Panc1 (cell line): ENCODE measurements at regions of chr19 and their contacts with region 1.

Region 1: DNA sequence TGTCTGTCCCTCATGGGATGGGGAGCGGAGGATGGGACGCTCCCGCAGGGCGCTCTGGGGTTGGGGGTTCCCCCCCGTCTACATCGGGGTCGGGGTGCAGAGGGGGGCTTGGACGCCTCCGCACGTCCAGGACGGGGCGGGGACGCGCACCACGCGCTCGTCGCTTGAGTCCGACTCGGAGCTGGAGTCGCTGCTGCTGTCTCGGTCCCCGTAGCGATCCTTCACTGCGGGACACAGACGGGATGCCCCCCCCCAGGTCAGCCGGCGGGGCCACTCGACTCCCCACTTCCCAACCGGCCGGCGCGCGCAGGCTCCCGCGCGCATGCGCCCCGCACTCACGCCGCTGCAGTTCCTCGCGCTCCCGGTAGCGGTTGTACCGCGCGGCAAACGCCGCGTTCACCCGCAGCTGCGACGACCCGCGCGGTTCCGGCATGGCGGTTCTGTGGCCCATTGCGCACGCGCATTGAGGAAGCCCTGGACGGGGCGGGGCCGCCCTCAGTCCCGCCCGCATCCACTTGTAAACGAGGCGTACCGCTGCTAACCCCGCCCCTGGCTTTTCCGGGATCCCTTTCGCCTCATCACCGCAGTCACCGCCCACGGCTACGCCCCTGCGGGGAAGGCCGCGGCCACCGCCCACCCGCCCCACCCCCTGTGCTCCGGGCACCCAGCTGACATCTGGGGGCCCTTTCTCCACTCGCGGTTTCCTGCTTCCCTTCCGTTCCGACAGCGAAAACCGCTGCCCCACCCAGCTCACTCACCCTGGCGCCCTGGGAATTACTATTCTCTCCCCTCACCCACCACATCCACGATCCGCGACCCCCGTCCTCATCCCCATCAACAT is at the start of gene KRI1:
- DNase-seq: no peak
- ATAC-seq: peak; percentile 72
- H3K4me3 ChIP-seq: peak within 1 kb of the TSS; percentile 68 to 69
- H3K27ac ChIP-seq: peak within 1 kb of the TSS; percentile 67
- H3K4me1 ChIP-seq: peaks cover 23% of the 10 kb centered on the region
- H3K27me3 ChIP-seq: no peaks in the 10 kb centered on the region
- CTCF ChIP-seq: no peak
- total RNA-seq, gene KRI1: 34.5 TPM

Region 2: DNA sequence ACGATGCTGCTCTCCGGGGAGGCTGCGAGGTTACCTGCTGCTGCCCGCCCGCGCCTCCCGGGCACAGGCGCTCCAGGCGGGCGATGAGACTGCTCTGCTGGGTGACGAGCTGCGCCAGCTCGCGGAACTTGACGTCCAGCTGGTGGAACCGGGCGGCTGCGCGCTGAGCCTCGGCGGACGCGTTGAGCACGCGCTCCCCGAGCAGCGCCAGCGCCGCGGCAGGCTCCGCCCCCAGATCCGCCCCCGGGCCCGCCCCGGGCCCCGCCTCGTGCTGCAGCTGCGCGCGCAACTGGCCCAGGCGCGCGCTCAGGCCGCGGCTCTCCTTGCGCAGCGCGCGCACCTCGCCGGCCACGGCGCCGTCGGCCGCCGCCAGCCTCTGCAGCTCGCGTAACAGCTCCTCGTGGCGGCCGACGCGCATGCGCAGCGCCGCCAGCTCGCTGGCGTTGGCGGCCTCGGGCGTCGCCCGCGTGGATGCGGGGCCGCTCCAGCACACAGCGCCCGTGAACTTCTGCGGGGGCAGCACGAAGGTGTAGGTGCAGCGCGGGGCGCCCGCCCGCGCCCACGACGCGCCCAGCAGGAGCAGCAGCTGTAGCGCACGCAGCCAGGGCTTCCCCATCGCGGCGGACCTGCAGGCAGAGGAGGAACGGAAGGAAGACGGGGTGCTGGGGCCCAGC is 469.7 kb before region 1 on chr19:
- CTCF ChIA-PET with region 1: no interaction called
- POLR2A ChIA-PET with region 1: no interaction called
- in situ Hi-C with region 1: no loop called
- intact Hi-C with region 1: no loop called
- DNase-seq: no peak
- ATAC-seq: peak; percentile 91
- H3K4me3 ChIP-seq: peak overlapping the region; percentile 41 to 61
- H3K27ac ChIP-seq: peak overlapping the region; percentile 77
- H3K4me1 ChIP-seq: no peaks in the 10 kb centered on the region
- H3K27me3 ChIP-seq: no peaks in the 10 kb centered on the region
- CTCF ChIP-seq: no peak

Region 3: GRCh38 chr19:10505583-10506229 is 60.1 kb before region 1 on chr19:
- CTCF ChIA-PET with region 1: no interaction called
- POLR2A ChIA-PET with region 1: no interaction called
- in situ Hi-C with region 1: no loop called
- intact Hi-C with region 1: no loop called
- DNase-seq: no peak
- ATAC-seq: 0 out of 2 replicates have a peak, but pooled peaks have one; percentile 10
- H3K4me3 ChIP-seq: no peak overlapping the region
- H3K27ac ChIP-seq: no peak overlapping the region
- H3K4me1 ChIP-seq: no peaks in the 10 kb centered on the region; the same call in 1 of the 2 replicates
- H3K27me3 ChIP-seq: no peaks in the 10 kb centered on the region
- CTCF ChIP-seq: peak; percentile 86

Region 4: GRCh38 chr19:10580979-10581631 is 15.3 kb after region 1 on chr19:
- CTCF ChIA-PET with region 1: no interaction called
- POLR2A ChIA-PET with region 1: no interaction called
- in situ Hi-C with region 1: no loop called
- intact Hi-C with region 1: no loop called
- DNase-seq: peak; percentile 76
- ATAC-seq: peak; percentile 91
- H3K4me3 ChIP-seq: peak overlapping the region in 1 of 2 experiments; percentile 37; a peak in 2 of 4 replicates
- H3K27ac ChIP-seq: no peak overlapping the region
- H3K4me1 ChIP-seq: no peaks in the 10 kb centered on the region
- H3K27me3 ChIP-seq: no peaks in the 10 kb centered on the region
- CTCF ChIP-seq: peak; percentile 94

Region 5: GRCh38 chr19:10695401-10696398 is 129.9 kb after region 1 on chr19:
- CTCF ChIA-PET with region 1: no interaction called
- POLR2A ChIA-PET with region 1: no interaction called
- in situ Hi-C with region 1: no loop called
- intact Hi-C with region 1: loop called (anchors 5 kb)
- DNase-seq: no peak
- ATAC-seq: peak; percentile 95
- H3K4me3 ChIP-seq: peak overlapping the region; percentile 21 to 40
- H3K27ac ChIP-seq: no peak overlapping the region
- H3K4me1 ChIP-seq: peaks cover 4% of the 10 kb centered on the region
- H3K27me3 ChIP-seq: no peaks in the 10 kb centered on the region
- CTCF ChIP-seq: no peak